ENCODE measurements at regions of chr5 and their contacts with region 1.

Region 1: GRCh38 chr5:95822542-95823181 is at the start of gene GLRX:
- DNase-seq: peak; percentile 80 to 87
- ATAC-seq: peak; percentile 69 to 73
- H3K4me3 ChIP-seq: peak within 1 kb of the TSS; percentile 75 to 100 (median 84)
- H3K27ac ChIP-seq: peak within 1 kb of the TSS; percentile 87 to 92 (median 91)
- H3K4me1 ChIP-seq: peaks cover 47 to 51% of the 10 kb centered on the region in 2 donors
- H3K27me3 ChIP-seq: no peaks in the 10 kb centered on the region
- CTCF ChIP-seq: no peak
- POLR2A ChIP-seq: peak; percentile 80 to 89
- total RNA-seq, gene GLRX: 1,042 to 2,721 (median 1,859) TPM

Region 2: GRCh38 chr5:95283761-95284415 is 538.8 kb before region 1 on chr5:
- in situ Hi-C with region 1: no loop called
- intact Hi-C with region 1: no loop called
- DNase-seq: no peak
- ATAC-seq: no peak
- H3K4me3 ChIP-seq: peak overlapping the region; percentile 47 to 65 (median 52)
- H3K27ac ChIP-seq: no peak overlapping the region
- H3K4me1 ChIP-seq: peaks cover 4 to 18% of the 10 kb centered on the region in 2 donors
- H3K27me3 ChIP-seq: peaks cover 59 to 70% (median 59%) of the 10 kb centered on the region in 3 donors
- CTCF ChIP-seq: no peak
- POLR2A ChIP-seq: no peak

Region 3: DNA sequence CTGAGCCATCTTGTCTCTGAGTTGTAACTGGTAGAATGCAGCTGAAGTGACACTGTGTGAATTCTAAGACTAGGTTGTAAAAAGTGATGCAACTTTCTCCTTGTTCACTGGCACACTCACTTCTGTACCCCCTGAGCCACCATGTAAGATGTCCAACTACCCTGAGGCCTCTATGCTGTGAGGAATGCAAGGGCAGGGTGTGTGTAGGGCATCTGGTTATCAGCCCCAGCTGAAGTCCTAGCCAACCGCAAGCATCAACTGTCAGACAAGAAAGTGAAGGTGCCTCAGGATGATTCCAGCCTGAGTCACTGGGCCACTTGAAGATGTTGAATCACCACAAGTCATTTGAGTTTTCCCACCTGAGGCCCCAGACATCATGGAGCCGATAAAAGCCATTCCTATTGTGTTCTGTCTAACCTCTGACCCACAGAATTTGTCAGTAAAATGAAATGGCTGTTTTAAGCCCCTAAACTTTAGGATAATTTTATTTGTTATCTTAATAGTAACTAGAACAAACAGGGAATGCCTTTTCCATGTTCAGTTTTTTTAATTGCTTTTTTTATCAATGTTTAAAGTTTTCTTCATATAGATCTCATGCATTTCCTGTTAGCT is 110.2 kb before region 1 on chr5:
- in situ Hi-C with region 1: no loop called
- intact Hi-C with region 1: no loop called
- DNase-seq: peak in 1 of 2 donors; percentile 50
- ATAC-seq: peak; percentile 55 to 79
- H3K4me3 ChIP-seq: no peak overlapping the region
- H3K27ac ChIP-seq: no peak overlapping the region
- H3K4me1 ChIP-seq: peaks cover 6 to 13% of the 10 kb centered on the region in 2 donors
- H3K27me3 ChIP-seq: no peaks in the 10 kb centered on the region
- CTCF ChIP-seq: no peak
- POLR2A ChIP-seq: no peak

Region 4: DNA sequence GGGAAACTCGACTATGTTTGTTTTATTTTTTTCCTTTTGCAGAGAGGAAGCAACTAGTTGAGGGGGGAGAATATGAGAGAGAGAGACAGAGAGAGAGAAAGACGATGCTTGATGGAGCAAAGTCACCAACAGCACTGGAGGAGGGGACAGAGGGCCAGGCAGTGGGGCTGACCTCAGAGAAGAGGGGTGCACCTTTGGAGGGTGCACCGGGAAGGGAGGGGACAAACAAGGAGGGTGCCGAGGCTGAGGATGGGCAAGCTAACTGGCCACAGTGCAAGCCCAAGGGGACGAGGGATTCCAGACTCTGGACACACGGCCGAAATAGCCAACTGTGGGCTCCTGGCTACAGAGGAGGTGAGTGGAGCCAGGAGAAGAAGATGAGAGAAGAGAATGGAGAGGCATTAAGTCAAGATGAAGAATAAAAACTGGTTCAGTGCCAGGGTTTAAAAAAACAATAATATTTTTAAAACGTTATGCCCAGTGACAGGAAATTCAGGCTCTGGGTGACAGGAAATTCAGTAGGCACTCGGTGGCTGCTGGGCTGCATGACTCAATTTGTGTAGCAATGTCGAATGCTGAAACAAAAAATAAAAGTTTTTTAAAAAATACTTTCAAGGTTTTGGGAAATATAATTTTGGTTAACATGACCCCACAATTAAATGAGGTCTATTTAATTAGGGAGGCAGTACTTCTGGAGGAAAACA is 13.2 kb after region 1 on chr5:
- in situ Hi-C with region 1: no loop called
- intact Hi-C with region 1: loop called (anchors 1 kb)
- DNase-seq: peak in 1 of 2 donors; percentile 55
- ATAC-seq: no peak
- H3K4me3 ChIP-seq: peak overlapping the region; percentile 59 to 78 (median 66)
- H3K27ac ChIP-seq: peak overlapping the region; percentile 90 to 95 (median 92)
- H3K4me1 ChIP-seq: peaks cover 21 to 56% of the 10 kb centered on the region in 2 donors
- H3K27me3 ChIP-seq: no peaks in the 10 kb centered on the region
- CTCF ChIP-seq: no peak
- POLR2A ChIP-seq: no peak

Region 5: DNA sequence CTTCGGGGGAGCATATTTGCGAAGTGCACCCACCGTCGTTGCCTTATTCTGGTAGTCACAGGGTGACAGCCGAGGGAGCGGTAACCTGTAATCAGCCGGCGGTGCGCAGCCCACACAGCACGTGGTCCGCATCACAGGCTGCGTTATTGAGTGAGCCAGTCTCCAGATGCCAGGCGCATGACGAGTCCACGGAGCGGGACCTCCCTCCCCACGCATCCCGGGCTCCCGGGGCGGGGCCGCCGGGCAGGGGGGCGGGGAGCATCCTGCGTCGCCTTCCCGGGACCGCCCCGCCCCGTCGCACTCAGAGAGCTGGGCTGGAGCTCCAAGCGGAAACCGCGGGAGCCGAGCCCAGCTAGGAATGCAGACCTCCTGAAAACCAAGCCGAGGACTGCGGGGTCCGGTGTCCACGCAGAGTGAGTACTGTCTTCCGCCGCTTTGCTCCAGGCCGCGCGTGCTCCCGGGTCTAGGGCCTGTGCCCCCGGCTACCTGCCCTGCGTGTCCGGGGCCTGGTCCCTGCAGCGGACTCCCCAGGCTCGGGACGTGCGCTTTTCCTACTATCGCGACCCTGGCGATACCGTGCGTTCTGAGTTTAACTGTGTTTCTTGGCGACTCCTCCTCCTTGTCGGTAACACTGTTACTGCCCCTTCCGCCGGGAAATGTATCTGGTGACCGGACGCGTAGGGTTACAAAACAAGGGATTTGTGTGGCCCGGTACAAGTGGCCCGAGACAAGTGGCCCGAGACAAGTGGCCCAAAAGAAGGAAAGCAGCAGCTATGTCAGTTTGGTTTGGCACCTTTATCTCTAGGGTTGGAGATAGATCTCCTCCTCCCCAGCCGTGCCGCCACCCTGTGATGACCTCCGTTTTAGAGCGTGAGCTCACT is 880.1 kb after region 1 on chr5:
- in situ Hi-C with region 1: loop called in 1 of 4 experiments (anchors 25 kb)
- intact Hi-C with region 1: loop called (anchors 5 kb)
- DNase-seq: peak; percentile 97 to 98
- ATAC-seq: peak; percentile 49 to 68
- H3K4me3 ChIP-seq: peak overlapping the region; percentile 63 to 87 (median 79)
- H3K27ac ChIP-seq: peak overlapping the region; percentile 94 to 99 (median 98)
- H3K4me1 ChIP-seq: peaks cover 38 to 75% of the 10 kb centered on the region in 2 donors
- H3K27me3 ChIP-seq: no peaks in the 10 kb centered on the region
- CTCF ChIP-seq: no peak
- POLR2A ChIP-seq: peak; percentile 90 to 93

Measured in gastrocnemius medialis (tissue), 4 donors.